ENCODE measurements at regions of chr5 and their contacts with region 1.

Region 1: DNA sequence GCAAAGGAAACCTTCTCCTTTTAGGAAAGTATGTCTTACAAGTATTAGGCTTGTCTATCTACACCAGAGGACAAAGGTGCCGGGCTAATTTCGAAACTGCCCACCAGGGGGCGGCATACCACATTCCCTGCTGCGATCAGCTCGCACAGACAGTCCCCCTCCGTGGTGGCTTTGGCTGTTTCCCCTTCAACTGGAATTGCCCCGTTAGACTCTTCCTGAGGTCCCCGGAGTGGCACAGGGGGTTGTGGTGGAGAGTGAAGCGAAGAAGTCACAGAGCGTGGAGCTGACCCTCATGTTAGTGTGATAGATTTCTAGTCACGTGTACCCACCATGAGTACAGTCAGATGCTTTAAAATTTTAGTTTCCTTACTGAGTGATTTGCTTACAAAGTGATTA is 17.5 kb downstream of the PTTG1 start:
- DNase-seq: peak; percentile 44
- H3K4me3 ChIP-seq: peak overlapping the region; percentile 60
- H3K27ac ChIP-seq: no peak overlapping the region
- H3K27me3 ChIP-seq: peaks cover 7% of the 10 kb centered on the region
- CTCF ChIP-seq: peak; percentile 95

Region 2: GRCh38 chr5:160418561-160419457 is 20.4 kb before region 1 on chr5 and contains the start of gene SLU7:
- CTCF ChIA-PET with region 1: interaction called, 113 read pairs
- POLR2A ChIA-PET with region 1: interaction called, 4 read pairs
- DNase-seq: peak; percentile 92
- H3K4me3 ChIP-seq: peak within 1 kb of the TSS; percentile 99
- H3K27ac ChIP-seq: peak within 1 kb of the TSS; percentile 58
- H3K27me3 ChIP-seq: no peaks in the 10 kb centered on the region
- CTCF ChIP-seq: no peak
- polyA plus RNA-seq, gene SLU7: 32.9 and 59.5 TPM in 2 replicates

Region 3: GRCh38 chr5:160452795-160453194 is 13.6 kb after region 1 on chr5:
- CTCF ChIA-PET with region 1: interaction called, 31 read pairs
- POLR2A ChIA-PET with region 1: no interaction called
- DNase-seq: no peak
- H3K4me3 ChIP-seq: no peak overlapping the region
- H3K27ac ChIP-seq: no peak overlapping the region
- H3K27me3 ChIP-seq: peaks cover 2% of the 10 kb centered on the region
- CTCF ChIP-seq: no peak

Region 4: GRCh38 chr5:160467555-160468362 is 28.6 kb after region 1 on chr5:
- CTCF ChIA-PET with region 1: interaction called, 47 read pairs
- POLR2A ChIA-PET with region 1: interaction called, 6 read pairs
- DNase-seq: peak; percentile 74
- H3K4me3 ChIP-seq: no peak overlapping the region; the same call in 1 of the 2 replicates
- H3K27ac ChIP-seq: no peak overlapping the region
- H3K27me3 ChIP-seq: no peaks in the 10 kb centered on the region
- CTCF ChIP-seq: no peak

Region 5: DNA sequence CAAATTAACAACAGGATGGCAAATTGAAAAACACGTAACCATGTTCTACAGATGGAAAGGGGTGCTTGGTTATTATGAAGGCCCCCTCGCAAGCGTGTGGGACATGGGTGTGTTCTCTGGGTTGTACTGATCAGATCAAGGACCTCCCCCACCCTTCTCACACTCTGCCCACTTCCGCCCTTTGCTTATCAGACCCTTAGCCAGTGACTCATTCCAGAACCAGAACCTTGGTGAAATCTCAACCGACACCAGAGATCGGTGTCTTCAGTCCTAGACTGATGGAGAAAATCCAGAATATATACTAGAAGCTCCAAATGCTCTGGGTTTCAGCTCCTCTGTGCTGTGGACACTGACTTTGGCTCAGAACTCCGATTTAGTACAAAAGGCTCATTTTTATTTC is 47.4 kb after region 1 on chr5:
- CTCF ChIA-PET with region 1: interaction called, 28 read pairs
- POLR2A ChIA-PET with region 1: no interaction called
- DNase-seq: no peak
- H3K4me3 ChIP-seq: no peak overlapping the region
- H3K27ac ChIP-seq: no peak overlapping the region
- H3K27me3 ChIP-seq: peaks cover 2% of the 10 kb centered on the region
- CTCF ChIP-seq: no peak

Region 6: GRCh38 chr5:160500786-160501779 is 61.9 kb after region 1 on chr5:
- CTCF ChIA-PET with region 1: interaction called, 78 read pairs
- POLR2A ChIA-PET with region 1: no interaction called
- DNase-seq: no peak
- H3K4me3 ChIP-seq: no peak overlapping the region
- H3K27ac ChIP-seq: no peak overlapping the region
- H3K27me3 ChIP-seq: peaks cover 3% of the 10 kb centered on the region
- CTCF ChIP-seq: no peak